ENCODE measurements at regions of chr9 and their contacts with region 1.

Region 1: DNA sequence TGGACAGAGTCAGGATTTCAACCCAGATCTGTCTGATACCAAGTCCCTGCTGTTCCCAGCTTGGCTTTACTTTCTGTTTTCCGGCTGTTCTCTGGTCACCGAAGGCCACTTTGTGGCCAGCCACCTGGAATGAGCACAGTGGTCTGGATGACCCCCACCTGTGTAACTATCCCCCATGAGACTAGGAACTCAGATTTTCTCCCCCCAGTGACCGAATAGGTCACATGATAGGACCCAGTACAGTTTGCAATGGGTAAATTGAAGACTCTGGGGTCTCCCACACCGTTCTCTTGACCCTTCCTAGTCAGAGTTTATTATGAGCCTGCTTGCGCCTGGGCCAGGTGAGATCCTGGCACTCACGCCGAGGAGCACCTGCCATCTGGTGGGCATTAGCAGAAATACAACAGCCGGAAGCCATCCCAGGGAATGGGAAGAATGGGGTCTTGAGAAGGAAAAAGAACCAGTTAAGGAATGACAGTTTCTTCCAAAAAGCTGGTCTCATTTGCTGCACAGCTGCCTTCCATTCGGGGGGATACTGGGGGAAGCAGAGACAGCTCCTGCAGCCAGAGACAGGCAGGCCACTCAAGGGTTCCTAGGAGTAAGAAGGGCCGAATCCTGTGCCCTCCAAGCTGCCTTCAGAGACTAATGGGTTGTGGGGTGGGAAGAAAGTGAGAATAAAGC is 7.1 kb downstream of the PHYHD1 start:
- DNase-seq: peak; percentile 63
- H3K4me3 Mint-ChIP-seq: no peak overlapping the region
- H3K27ac Mint-ChIP-seq: peak overlapping the region; percentile 0
- H3K4me1 Mint-ChIP-seq: peaks cover 24% of the 10 kb centered on the region
- H3K27me3 Mint-ChIP-seq: no peaks in the 10 kb centered on the region

Region 2: DNA sequence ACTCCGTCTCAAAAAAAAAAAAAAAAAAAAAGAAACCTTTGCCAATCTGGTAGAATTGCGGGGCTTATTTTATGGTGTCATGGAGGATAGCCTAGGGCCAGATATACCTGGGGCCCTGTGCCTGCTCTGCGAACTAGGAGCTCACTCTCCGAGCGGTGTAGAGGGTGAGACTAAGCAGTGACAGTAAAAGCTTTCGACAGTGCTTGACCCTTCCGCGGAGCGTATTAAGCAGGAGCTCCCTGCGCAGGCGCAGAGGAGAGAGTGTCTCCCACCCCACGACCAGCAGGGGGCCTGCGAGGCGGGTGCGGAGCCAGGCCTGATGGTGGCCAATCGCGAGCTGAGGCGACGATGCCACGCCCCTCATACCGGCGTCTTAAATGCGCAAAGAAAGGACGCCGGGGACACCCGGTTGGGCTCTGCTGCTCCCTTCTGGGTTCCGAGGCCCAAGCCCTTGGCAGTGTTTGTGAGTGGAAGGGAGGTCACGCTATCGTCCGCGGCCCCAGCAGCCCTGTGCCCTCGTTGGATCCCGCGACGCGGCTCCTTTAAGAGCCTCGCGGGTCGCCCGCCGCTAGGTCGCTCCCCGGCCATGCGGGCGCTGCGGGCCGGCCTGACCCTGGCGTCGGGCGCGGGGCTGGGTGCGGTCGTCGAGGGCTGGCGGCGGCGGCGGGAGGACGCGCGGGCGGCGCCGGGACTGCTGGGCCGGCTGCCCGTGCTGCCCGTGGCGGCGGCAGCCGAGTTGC is 109.6 kb before region 1 on chr9 and contains the start of gene ENDOG:
- CTCF ChIA-PET with region 1: interaction called, 10 read pairs
- DNase-seq: peak; percentile 98
- H3K4me3 Mint-ChIP-seq: peak within 1 kb of the TSS; percentile 80
- H3K27ac Mint-ChIP-seq: peak within 1 kb of the TSS; percentile 89
- H3K4me1 Mint-ChIP-seq: peaks cover 29% of the 10 kb centered on the region
- H3K27me3 Mint-ChIP-seq: peaks cover 7% of the 10 kb centered on the region

Region 3: GRCh38 chr9:128863647-128864046 is 64.2 kb before region 1 on chr9:
- CTCF ChIA-PET with region 1: interaction called, 153 read pairs
- DNase-seq: peak; percentile 91
- H3K4me3 Mint-ChIP-seq: no peak overlapping the region
- H3K27ac Mint-ChIP-seq: peak overlapping the region; percentile 70
- H3K4me1 Mint-ChIP-seq: peaks cover 22% of the 10 kb centered on the region
- H3K27me3 Mint-ChIP-seq: no peaks in the 10 kb centered on the region

Region 4: GRCh38 chr9:128870128-128870952 is 57.5 kb before region 1 on chr9:
- CTCF ChIA-PET with region 1: interaction called, 153 read pairs
- DNase-seq: no peak
- H3K4me3 Mint-ChIP-seq: no peak overlapping the region
- H3K27ac Mint-ChIP-seq: no peak overlapping the region
- H3K4me1 Mint-ChIP-seq: peaks cover 8% of the 10 kb centered on the region
- H3K27me3 Mint-ChIP-seq: no peaks in the 10 kb centered on the region

Region 5: DNA sequence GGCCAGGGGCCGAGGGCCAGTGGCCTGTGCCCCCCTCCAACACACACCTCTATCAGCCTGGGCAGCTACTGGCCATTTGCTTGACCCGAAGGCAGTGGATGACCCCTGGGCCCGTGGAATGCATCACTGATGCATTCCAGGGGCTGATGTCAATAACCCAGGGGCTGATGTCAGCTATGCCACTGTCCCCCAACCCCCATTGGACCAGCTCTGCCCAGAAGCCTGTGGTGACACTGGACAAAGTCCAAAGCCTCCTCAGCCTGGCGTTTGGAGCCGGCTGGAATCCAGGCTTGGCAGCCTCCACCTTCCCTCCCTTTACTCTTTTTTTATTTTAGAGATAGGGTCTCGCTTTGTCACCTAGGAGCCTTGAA is 52.1 kb before region 1 on chr9:
- CTCF ChIA-PET with region 1: interaction called, 13 read pairs
- DNase-seq: no peak
- H3K4me3 Mint-ChIP-seq: no peak overlapping the region
- H3K27ac Mint-ChIP-seq: no peak overlapping the region
- H3K4me1 Mint-ChIP-seq: peaks cover 29% of the 10 kb centered on the region
- H3K27me3 Mint-ChIP-seq: no peaks in the 10 kb centered on the region

Region 6: DNA sequence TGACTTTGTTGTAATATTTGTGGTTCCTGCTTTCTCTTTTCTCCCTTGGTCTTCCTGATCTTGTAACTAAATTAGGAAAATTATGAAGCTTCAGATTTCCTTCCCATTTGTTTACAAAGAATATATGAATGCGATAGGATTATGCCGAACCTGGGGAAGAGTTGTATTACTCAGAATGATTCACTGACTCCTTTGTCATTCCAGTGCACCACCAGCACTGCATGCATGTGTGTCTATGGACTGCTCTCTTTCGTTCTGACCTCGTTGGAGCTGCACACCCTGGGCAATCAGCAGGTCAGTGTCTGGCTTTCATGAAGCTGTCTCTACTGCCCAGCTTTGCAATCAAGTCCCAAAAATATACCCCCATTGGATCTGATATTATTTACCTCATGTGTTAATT is 45.1 kb after region 1 on chr9:
- CTCF ChIA-PET with region 1: no interaction called
- DNase-seq: no peak
- H3K4me3 Mint-ChIP-seq: no peak overlapping the region
- H3K27ac Mint-ChIP-seq: no peak overlapping the region
- H3K4me1 Mint-ChIP-seq: no peaks in the 10 kb centered on the region
- H3K27me3 Mint-ChIP-seq: no peaks in the 10 kb centered on the region